ENCODE measurements at regions of chr6 and their contacts with region 1.

Region 1: GRCh38 chr6:42390228-42390934 is 61.3 kb downstream of the TRERF1 start:
- DNase-seq: no peak
- H3K4me3 ChIP-seq: no peak overlapping the region
- H3K27ac ChIP-seq: no peak overlapping the region
- H3K4me1 ChIP-seq: peaks cover 11% of the 10 kb centered on the region
- H3K27me3 ChIP-seq: peaks cover 2% of the 10 kb centered on the region
- CTCF ChIP-seq: no peak

Region 2: GRCh38 chr6:42338663-42339218 is 51.6 kb before region 1 on chr6:
- CTCF ChIA-PET with region 1: no interaction called
- dilution Hi-C with region 1: no loop called
- in situ Hi-C with region 1: no loop called
- intact Hi-C with region 1: no loop called
- DNase-seq: peak; percentile 96
- H3K4me3 ChIP-seq: no peak overlapping the region
- H3K27ac ChIP-seq: peak overlapping the region; percentile 82
- H3K4me1 ChIP-seq: peaks cover 28% of the 10 kb centered on the region
- H3K27me3 ChIP-seq: no peaks in the 10 kb centered on the region
- CTCF ChIP-seq: no peak

Region 3: DNA sequence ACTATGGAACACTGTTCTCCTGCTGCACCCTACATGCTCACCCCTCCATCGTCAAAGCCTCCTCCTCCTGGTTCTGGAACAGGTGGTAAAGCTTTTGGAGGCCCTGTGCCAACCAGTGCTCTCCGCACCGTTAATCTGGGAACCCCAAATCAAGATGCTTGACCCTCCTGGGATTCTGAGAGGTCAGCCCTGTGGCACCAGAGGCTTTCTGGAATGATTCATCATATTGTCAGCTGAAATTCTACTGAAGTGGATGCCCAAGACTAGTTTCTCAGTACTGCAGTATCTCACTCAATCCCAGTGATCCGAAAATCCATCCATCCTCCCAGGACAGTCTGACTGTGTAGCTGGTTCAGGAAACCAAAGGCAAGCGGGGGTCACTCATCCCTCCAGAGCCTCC is 31.4 kb before region 1 on chr6:
- CTCF ChIA-PET with region 1: no interaction called
- dilution Hi-C with region 1: loop called (anchors 5 kb)
- in situ Hi-C with region 1: no loop called
- intact Hi-C with region 1: no loop called
- DNase-seq: no peak
- H3K4me3 ChIP-seq: no peak overlapping the region
- H3K27ac ChIP-seq: no peak overlapping the region
- H3K4me1 ChIP-seq: no peaks in the 10 kb centered on the region
- H3K27me3 ChIP-seq: no peaks in the 10 kb centered on the region
- CTCF ChIP-seq: no peak

Region 4: GRCh38 chr6:42429850-42430214 is 39.5 kb after region 1 on chr6:
- CTCF ChIA-PET with region 1: interaction called, 8 read pairs
- dilution Hi-C with region 1: loop called (anchors 5 kb)
- in situ Hi-C with region 1: no loop called
- intact Hi-C with region 1: no loop called
- DNase-seq: no peak
- H3K4me3 ChIP-seq: no peak overlapping the region
- H3K27ac ChIP-seq: no peak overlapping the region
- H3K4me1 ChIP-seq: peaks cover 4% of the 10 kb centered on the region
- H3K27me3 ChIP-seq: no peaks in the 10 kb centered on the region
- CTCF ChIP-seq: no peak

Region 5: GRCh38 chr6:43096451-43097097 is 706.2 kb after region 1 on chr6:
- CTCF ChIA-PET with region 1: no interaction called
- dilution Hi-C with region 1: no loop called
- in situ Hi-C with region 1: no loop called
- intact Hi-C with region 1: no loop called
- DNase-seq: peak; percentile 95
- H3K4me3 ChIP-seq: peak overlapping the region; percentile 21 to 54 (median 23)
- H3K27ac ChIP-seq: peak overlapping the region; percentile 81
- H3K4me1 ChIP-seq: peaks cover 53% of the 10 kb centered on the region
- H3K27me3 ChIP-seq: no peaks in the 10 kb centered on the region
- CTCF ChIP-seq: no peak